PC-3 (cell line): ENCODE measurements at regions of chr1 and their contacts with region 1.

Region 1: GRCh38 chr1:36149237-36149972 is at the start of gene TRAPPC3:
- DNase-seq: peak; percentile 99
- ATAC-seq: peak; percentile 86
- H3K4me3 ChIP-seq: peak within 1 kb of the TSS; percentile 94
- H3K27ac ChIP-seq: peak within 1 kb of the TSS; percentile 96
- H3K4me1 ChIP-seq: peaks cover 27% of the 10 kb centered on the region
- H3K27me3 ChIP-seq: no peaks in the 10 kb centered on the region
- CTCF ChIP-seq: peak; percentile 96
- total RNA-seq, gene TRAPPC3: 119 and 236 TPM in 2 replicates

Region 2: DNA sequence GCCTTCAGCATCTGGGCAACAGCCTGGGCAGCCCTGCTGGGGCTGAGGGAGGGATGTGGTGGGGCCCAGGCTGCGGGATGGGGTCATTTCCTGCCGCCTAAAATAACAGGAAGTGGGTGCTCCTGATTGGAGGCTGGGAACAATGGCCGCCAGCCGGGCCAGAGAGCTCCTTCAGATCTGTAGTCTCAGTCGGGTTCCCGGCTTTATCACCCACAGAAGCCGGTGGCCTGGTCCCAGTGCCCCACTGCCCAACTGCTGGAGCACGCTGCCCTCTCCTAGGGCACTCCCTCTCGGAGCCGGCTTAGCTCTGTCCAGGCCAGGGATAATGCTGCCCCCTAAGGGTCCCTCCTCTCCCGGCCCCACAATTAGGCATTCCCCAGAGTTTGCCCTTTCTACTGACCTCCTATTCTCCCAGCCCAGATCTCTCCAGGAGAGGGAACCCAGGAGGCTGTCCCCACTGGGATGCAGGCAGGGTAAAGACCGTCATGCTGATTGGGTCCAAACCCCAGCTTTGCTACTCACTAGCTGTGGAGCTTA is 11.6 kb after region 1 on chr1:
- CTCF ChIA-PET with region 1: interaction called, 4 read pairs
- POLR2A ChIA-PET with region 1: interaction called, 3 read pairs
- intact Hi-C with region 1: loop called (anchors 1 kb)
- DNase-seq: peak; percentile 35
- ATAC-seq: peak; percentile 19
- H3K4me3 ChIP-seq: peak overlapping the region; percentile 14; the same call in 1 of the 2 replicates
- H3K27ac ChIP-seq: peak overlapping the region; percentile 46
- H3K4me1 ChIP-seq: peaks cover 47% of the 10 kb centered on the region
- H3K27me3 ChIP-seq: no peaks in the 10 kb centered on the region
- CTCF ChIP-seq: peak; percentile 58

Region 3: GRCh38 chr1:36203554-36204346 is 54.3 kb after region 1 on chr1:
- CTCF ChIA-PET with region 1: no interaction called
- POLR2A ChIA-PET with region 1: no interaction called
- intact Hi-C with region 1: loop called (anchors 5 kb)
- DNase-seq: no peak
- ATAC-seq: no peak
- H3K4me3 ChIP-seq: no peak overlapping the region
- H3K27ac ChIP-seq: no peak overlapping the region
- H3K4me1 ChIP-seq: peaks cover 13% of the 10 kb centered on the region; the same call in 1 of the 2 replicates
- H3K27me3 ChIP-seq: no peaks in the 10 kb centered on the region
- CTCF ChIP-seq: no peak

Region 4: GRCh38 chr1:36223993-36224536 is 74.7 kb after region 1 on chr1 and contains the start of gene THRAP3:
- CTCF ChIA-PET with region 1: interaction called, 5 read pairs
- POLR2A ChIA-PET with region 1: interaction called, 4 read pairs
- intact Hi-C with region 1: loop called (anchors 1 kb)
- DNase-seq: peak; percentile 99
- ATAC-seq: peak; percentile 96
- H3K4me3 ChIP-seq: peak within 1 kb of the TSS; percentile 100
- H3K27ac ChIP-seq: peak within 1 kb of the TSS; percentile 93
- H3K4me1 ChIP-seq: peaks cover 15% of the 10 kb centered on the region
- H3K27me3 ChIP-seq: no peaks in the 10 kb centered on the region
- CTCF ChIP-seq: no peak
- total RNA-seq, gene THRAP3: 55.7 and 67.0 TPM in 2 replicates

Region 5: DNA sequence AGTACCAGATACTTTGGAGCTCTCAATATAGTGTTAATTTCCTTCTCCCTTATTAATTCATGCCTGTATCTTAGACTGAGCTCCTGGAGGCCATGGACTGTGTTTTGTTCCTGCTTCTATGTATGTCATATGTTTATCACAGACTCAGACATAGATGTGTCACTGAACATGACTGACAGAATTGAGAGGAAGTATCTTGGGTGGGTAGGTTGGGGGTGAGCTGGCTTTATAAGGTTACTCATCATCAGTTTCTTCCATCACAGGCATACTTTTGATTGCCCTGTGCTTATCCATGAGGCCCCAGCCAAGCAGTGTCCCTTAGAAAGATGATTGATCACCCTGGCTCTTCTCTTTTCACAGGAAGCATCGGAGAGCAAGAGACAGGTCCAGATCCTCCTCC is 151.1 kb after region 1 on chr1:
- CTCF ChIA-PET with region 1: interaction called, 8 read pairs
- POLR2A ChIA-PET with region 1: interaction called, 14 read pairs
- intact Hi-C with region 1: no loop called
- DNase-seq: peak; percentile 76
- ATAC-seq: peak; percentile 29
- H3K4me3 ChIP-seq: peak overlapping the region; percentile 19; the same call in 1 of the 2 replicates
- H3K27ac ChIP-seq: peak overlapping the region; percentile 86
- H3K4me1 ChIP-seq: peaks cover 33% of the 10 kb centered on the region
- H3K27me3 ChIP-seq: no peaks in the 10 kb centered on the region
- CTCF ChIP-seq: no peak